Mammary epithelial cell (primary cell): ENCODE measurements at regions of chr19 and their contacts with region 1.

Region 1: DNA sequence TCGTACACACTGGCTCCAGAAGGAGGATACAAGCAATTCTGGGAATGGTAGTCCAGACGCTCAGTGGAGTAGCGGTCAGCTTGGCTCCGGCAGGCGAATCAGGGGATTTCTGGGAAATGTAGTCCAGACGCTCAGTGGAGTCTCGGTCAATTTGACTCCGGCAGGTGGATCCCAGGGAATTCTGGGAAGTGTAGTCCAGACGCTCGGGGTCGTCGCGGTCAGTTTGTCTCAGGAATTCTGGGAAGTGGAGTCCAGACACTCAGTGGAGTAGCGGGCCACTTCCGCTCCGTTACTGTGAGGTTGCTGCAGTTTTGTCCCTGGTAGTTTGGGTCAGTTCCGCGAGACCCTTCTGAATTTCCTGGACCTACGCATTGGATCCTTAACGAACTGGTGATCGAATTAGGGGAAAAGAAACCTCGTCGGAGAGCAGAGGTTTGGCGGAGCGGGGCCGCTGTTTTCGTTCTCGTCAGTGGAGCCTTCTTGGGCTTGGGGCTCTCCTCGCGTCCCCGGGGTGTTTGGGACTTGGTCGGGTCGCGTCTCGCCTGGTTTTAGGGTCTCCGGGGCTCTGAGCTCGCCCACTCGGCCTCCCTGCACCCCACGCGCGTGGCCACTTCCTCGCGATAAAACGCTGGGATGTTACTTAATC is at the start of gene ZNF225:
- DNase-seq: peak; percentile 98
- H3K4me3 ChIP-seq: peak within 1 kb of the TSS; percentile 59 to 68 (median 68)
- H3K27ac ChIP-seq: no peak within 1 kb of the TSS
- H3K4me1 ChIP-seq: peaks cover 8% of the 10 kb centered on the region
- H3K27me3 ChIP-seq: no peaks in the 10 kb centered on the region
- CTCF ChIP-seq: no peak
- total RNA-seq, gene ZNF225: 3.7 to 4.5 TPM

Region 2: GRCh38 chr19:44093931-44094765 is 19.1 kb before region 1 on chr19 and contains the start of gene ZNF224:
- CTCF ChIA-PET with region 1: no interaction called
- dilution Hi-C with region 1: no loop called
- in situ Hi-C with region 1: no loop called
- intact Hi-C with region 1: loop called (anchors 1 kb)
- DNase-seq: peak; percentile 89
- H3K4me3 ChIP-seq: peak within 1 kb of the TSS; percentile 82 to 93 (median 89)
- H3K27ac ChIP-seq: peak within 1 kb of the TSS; percentile 49
- H3K4me1 ChIP-seq: no peaks in the 10 kb centered on the region
- H3K27me3 ChIP-seq: no peaks in the 10 kb centered on the region
- CTCF ChIP-seq: no peak
- total RNA-seq, gene ZNF224: 15.3 to 24.0 TPM

Region 3: DNA sequence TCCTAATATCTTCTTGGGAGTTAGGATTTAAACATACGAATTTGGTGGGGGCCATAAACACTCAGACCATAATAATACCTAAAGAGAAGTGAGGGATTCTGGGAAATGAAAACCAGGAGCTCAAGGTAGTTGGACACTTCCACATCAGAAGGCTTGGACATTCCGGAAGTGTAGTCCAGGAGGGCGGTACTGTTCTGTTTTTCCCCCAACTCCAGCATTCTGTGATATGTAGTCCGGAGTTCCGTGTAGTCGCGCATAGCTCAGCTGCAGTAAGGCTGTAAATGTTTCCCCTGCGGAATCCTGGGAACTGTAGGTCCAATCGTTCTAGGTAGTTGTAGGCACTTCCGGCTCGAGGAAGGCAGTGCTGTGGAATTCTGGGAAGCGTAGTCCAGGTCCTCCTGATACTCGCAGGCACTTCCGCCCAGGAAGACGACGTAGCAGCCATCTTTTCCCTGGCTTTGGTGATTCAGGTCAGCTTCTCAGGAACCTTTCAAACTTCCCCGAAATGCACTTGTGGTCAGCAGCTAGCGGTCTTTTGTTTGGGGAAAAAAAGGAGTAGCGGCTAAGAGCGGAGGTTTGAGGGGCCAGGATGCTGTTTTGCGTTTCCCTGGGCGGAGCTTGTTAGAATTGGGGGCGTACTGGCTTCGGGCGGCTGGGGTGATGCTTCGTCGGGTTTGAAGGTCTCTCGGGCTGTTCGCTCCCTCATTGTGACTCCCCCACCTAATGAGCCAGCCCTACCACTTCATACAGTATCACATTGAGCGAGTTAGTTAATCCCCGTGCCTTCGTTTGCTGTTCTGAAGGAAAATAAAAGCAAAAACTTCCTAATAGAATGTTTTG is 51.6 kb after region 1 on chr19 and contains the start of gene ZNF226:
- CTCF ChIA-PET with region 1: no interaction called
- dilution Hi-C with region 1: no loop called
- in situ Hi-C with region 1: no loop called
- intact Hi-C with region 1: loop called (anchors 1 kb)
- DNase-seq: peak; percentile 99
- H3K4me3 ChIP-seq: peak within 1 kb of the TSS; percentile 80 to 82 (median 81)
- H3K27ac ChIP-seq: peak within 1 kb of the TSS; percentile 79
- H3K4me1 ChIP-seq: peaks cover 10% of the 10 kb centered on the region
- H3K27me3 ChIP-seq: no peaks in the 10 kb centered on the region
- CTCF ChIP-seq: no peak
- total RNA-seq, gene ZNF226: 15.2 to 19.6 TPM

Region 4: DNA sequence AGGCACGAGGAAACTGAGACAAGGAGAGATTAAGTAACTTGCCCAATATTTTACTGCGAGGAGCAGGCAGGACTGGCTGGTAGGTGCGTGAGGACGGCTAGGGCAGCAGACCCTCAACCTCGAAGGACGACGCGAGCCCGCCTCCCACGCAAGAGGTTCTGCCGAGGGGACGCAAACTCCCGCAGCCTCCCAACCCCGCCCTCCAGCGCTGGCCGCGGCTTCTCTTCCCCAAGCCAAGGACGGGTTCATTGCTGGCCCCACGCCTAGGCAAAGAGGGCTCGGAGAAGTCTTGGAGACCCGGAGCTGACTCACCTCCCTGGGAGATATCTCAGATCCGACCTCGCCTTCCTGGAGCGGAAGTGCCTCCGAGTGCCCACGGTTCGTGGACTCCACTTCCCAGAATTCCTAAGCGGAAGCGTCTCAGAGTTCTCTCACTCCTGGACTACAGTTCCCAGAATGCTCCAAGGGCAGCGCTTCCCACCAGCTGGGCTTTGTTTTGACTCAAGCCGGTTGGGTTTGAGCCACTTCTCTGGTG is 191.5 kb after region 1 on chr19 and contains the start of gene ZNF235:
- CTCF ChIA-PET with region 1: no interaction called
- dilution Hi-C with region 1: no loop called
- in situ Hi-C with region 1: no loop called
- intact Hi-C with region 1: loop called (anchors 2 kb)
- DNase-seq: peak; percentile 97
- H3K4me3 ChIP-seq: peak within 1 kb of the TSS; percentile 77 to 86 (median 79)
- H3K27ac ChIP-seq: peak within 1 kb of the TSS; percentile 63
- H3K4me1 ChIP-seq: peaks cover 6% of the 10 kb centered on the region
- H3K27me3 ChIP-seq: no peaks in the 10 kb centered on the region
- CTCF ChIP-seq: no peak
- total RNA-seq, gene ZNF235: 6.9 to 7.8 TPM

Region 5: DNA sequence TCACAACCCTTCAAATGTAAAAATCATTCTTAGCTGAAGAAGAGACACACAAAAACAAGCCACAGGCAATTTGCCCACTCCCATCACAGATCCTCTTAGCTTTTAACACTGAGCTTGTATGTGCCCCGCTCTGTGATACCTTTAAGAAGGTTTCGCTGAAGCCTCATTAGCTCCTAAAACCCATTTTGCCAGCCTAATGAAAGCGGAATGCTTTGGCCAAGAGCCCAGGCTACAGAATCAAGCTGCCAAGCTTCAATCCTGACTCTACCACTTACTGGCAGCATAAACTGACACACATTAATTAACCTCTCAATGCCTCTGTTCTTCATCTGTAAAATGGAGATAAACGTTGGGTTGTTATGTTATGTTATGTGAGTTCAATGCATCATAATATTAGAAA is 232.7 kb after region 1 on chr19:
- CTCF ChIA-PET with region 1: no interaction called
- dilution Hi-C with region 1: no loop called
- in situ Hi-C with region 1: no loop called
- intact Hi-C with region 1: no loop called
- DNase-seq: no peak
- H3K4me3 ChIP-seq: no peak overlapping the region
- H3K27ac ChIP-seq: no peak overlapping the region
- H3K4me1 ChIP-seq: no peaks in the 10 kb centered on the region
- H3K27me3 ChIP-seq: no peaks in the 10 kb centered on the region
- CTCF ChIP-seq: no peak

Region 6: DNA sequence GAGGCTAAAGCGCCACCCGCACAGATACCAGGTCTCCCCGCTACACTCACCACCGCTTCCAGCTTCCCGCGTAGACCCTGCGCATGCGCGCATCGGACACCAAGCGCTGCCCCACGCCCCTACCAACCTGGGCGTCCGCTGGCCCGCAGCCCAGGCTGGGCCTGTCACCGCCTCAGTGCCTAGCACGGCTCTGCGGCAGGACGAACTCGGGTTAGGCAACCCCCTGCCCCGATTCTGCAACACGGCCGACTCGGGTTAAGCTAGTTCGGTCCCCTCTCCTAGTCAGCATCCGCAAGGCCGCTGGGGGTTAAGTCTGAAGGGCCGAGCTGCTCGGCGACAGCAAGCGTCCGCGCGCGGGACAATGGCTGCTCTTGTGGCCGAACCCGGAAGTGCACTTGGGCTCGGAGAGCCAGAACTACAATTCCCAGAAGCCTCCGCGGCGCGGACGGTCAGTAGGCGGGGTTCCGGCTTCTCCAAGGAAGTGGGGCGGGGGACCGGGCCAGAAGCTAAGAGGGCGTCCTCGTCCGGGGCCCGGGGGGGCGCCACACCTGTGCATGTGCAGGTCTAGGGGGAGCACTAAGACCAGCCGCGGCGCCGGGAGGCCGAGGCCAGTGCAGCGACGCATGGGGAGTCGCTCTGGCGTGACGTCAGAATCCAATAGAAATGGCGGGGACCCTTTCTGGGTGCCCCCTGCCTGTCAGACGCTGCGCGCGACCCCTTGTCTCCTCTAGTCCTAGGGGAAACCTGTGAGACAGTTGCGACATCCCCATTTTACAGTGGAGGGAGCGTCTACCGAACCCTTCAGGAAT is 387.1 kb after region 1 on chr19 and contains the start of gene ZNF180:
- CTCF ChIA-PET with region 1: no interaction called
- dilution Hi-C with region 1: no loop called
- in situ Hi-C with region 1: no loop called
- intact Hi-C with region 1: loop called (anchors 2 kb)
- DNase-seq: peak; percentile 92
- H3K4me3 ChIP-seq: peak within 1 kb of the TSS; percentile 71 to 85 (median 85)
- H3K27ac ChIP-seq: peak within 1 kb of the TSS; percentile 78
- H3K4me1 ChIP-seq: peaks cover 8% of the 10 kb centered on the region
- H3K27me3 ChIP-seq: no peaks in the 10 kb centered on the region
- CTCF ChIP-seq: peak; percentile 5 to 49
- total RNA-seq, gene ZNF180: 7.1 to 7.2 TPM